ENCODE measurements at regions of chr3 and their contacts with region 1.

Region 1: GRCh38 chr3:71064288-71064955 is 519.1 kb downstream of the FOXP1 start:
- DNase-seq: peak in 21 of 42 donors; percentile 17 to 68 (median 43)

Region 2: DNA sequence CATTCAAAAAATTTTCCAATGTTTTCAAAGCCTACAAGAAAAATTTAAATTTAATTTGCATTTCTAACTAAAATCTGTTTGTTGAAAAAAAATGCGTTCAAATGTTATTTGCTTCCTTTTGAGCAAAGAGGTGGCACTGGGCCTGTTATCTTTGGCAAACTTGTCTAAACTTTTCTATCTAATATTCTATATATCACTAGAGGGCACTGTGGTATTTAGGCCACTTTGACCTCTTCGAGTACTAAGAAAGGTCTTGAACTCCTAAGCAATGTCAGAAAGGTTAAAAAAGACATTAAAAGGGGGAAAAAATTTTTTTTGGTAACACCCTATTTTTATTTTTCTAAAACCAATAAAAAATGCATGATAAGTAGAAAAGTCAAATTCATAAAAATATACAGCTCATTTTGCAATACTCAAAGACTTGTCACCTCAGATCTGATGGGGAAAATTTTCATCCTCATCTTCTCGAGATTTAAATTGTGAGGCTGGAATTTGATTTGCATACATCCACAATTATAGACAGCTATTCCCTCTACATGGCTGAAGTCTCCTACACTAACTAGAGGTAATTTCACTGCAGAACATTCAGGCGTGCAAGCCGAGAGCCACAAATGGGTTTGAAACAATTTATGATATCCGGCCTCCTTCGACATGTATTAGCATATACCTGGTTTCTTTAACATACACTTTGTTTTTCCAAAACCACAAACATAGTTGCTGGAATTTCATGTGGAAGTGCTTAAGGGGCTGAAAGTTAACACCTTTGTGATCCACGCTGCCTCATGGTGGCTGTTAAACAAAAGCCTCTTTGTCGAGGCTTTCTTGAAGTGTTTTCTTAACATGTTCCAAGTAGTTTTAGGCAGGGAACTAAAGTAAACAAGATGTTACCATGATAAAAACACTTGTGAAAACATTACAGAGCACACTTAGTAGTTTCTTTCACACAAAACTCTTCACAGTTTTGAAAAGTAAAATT is 57.3 kb before region 1 on chr3:
- intact Hi-C with region 1: loop called (anchors 10 kb)
- DNase-seq: peak in 2 of 42 donors; percentile 27 to 35

Region 3: GRCh38 chr3:71305231-71306206 is 241.1 kb after region 1 on chr3:
- intact Hi-C with region 1: loop called (anchors 10 kb)
- DNase-seq: peak in 39 of 42 donors; percentile 5 to 74 (median 40)

Region 4: GRCh38 chr3:71611099-71611498 is 546.7 kb after region 1 on chr3:
- intact Hi-C with region 1: no loop called
- DNase-seq: no peak